Heart left ventricle (tissue), 16 donors: ENCODE measurements at regions of chr14 and their contacts with region 1.

Region 1: DNA sequence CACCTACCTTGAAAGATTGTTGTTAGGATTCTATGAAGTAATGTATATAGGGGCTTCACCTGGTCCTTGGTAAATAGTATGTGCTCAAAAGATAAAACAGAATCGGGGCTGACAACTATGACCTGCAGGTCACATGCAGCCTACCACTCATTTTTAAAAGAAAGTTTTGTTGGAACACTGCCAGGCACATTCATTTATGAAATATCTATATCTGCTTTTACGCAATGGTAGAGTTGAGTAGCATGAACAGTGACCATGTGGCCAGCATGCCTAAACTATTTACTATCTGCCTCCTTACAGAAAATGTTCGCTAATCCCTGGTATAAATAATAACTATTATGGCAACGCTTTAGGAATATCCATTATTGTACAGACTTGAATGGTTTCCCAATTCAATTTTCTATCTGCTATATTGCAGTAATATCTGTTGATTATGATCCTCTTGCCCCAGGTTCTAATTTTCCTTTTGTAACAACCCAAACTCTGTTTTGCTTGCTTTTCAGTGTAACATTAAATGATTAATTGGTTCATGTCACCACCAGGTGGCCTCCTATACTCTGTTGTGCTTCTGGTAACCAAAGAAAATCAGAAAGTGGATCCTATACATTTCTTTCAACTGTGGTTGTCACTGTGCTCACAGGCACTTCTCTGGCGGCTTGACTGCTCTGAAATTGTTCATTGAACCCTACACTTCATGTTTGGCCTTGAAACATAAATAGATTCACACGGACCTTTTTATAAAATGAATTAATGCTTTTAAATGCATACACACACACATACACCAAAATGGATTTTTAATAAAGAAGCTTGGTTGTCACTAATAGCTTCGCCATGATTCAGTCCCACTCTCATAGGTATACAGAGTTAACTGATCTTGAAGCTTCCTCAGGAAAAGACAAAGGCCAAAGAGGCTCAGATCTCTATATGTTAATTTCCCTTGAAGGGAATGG is 227.7 kb upstream of the NPAS3 start:
- DNase-seq: peak in 1 of 5 donors; percentile 17
- ATAC-seq: peak in 1 of 4 donors; percentile 38
- H3K4me3 ChIP-seq: peak overlapping the region in 4 of 12 donors; percentile 7 to 24 (median 18)
- H3K27ac ChIP-seq: peak overlapping the region in 4 of 12 donors; percentile 12 to 79 (median 66)
- H3K4me1 ChIP-seq: peaks cover 5 to 45% (median 34%) of the 10 kb centered on the region in 12 donors
- H3K27me3 ChIP-seq: no peaks in the 10 kb centered on the region
- CTCF ChIP-seq: peak; percentile 31 to 70 (median 55)
- POLR2A ChIP-seq: no peak

Region 2: DNA sequence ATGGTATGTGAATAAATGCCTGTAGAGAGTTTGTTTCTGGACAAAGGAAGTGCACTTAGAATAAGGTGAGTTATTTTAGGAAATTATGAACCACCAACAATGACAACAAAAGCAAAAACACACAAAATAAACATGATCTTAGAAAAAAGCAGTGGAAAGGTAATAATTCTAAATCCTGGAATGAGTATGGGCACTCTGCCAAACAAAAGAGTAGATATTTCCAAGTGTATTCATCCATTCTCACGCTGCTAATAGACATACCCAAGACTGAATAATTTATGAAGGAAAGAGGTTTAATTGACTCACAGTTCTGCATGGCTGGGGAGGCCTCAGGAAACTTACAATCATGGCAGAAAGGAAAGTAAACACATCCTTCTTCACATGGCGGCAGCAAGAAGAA is 41.6 kb before region 1 on chr14:
- intact Hi-C with region 1: no loop called
- DNase-seq: no peak
- ATAC-seq: no peak
- H3K4me3 ChIP-seq: no peak overlapping the region
- H3K27ac ChIP-seq: no peak overlapping the region
- H3K4me1 ChIP-seq: peaks cover 0 to 8% (median 0%) of the 10 kb centered on the region in 12 donors
- H3K27me3 ChIP-seq: no peaks in the 10 kb centered on the region
- CTCF ChIP-seq: no peak
- POLR2A ChIP-seq: no peak

Region 3: DNA sequence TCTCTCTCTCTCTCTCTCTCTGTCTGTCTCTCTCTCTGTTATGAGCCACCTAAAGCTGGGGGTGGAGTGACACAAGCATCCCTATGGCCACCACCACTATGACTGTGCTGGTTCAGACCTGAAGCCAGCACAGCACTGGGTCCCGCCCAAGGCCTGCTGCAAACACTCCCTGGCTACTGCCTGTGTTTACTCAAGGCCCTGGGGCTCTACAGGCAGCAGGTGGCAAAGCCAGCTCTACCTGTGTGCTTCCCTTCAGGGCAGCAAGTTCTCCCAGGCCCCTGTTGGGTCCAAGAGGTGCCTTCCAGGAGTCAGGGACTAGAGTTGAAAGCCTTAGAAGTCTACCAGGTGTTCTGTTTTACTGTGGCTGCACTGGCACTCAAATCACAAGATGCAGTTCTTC is 34.5 kb after region 1 on chr14:
- intact Hi-C with region 1: no loop called
- DNase-seq: no peak
- ATAC-seq: no peak
- H3K4me3 ChIP-seq: no peak overlapping the region
- H3K27ac ChIP-seq: no peak overlapping the region
- H3K4me1 ChIP-seq: peaks cover 0 to 3% (median 0%) of the 10 kb centered on the region in 12 donors
- H3K27me3 ChIP-seq: no peaks in the 10 kb centered on the region
- CTCF ChIP-seq: no peak
- POLR2A ChIP-seq: no peak

Region 4: GRCh38 chr14:32820181-32820580 is 109.2 kb after region 1 on chr14:
- intact Hi-C with region 1: loop called in 6 of 10 experiments (anchors 5 to 10 kb)
- DNase-seq: peak in 3 of 5 donors; percentile 31 to 37 (median 34)
- ATAC-seq: peak; percentile 56 to 73 (median 67)
- H3K4me3 ChIP-seq: no peak overlapping the region
- H3K27ac ChIP-seq: peak overlapping the region; percentile 26 to 96 (median 74)
- H3K4me1 ChIP-seq: peaks cover 0 to 70% (median 9%) of the 10 kb centered on the region in 12 donors
- H3K27me3 ChIP-seq: no peaks in the 10 kb centered on the region
- CTCF ChIP-seq: no peak
- POLR2A ChIP-seq: no peak

Region 5: DNA sequence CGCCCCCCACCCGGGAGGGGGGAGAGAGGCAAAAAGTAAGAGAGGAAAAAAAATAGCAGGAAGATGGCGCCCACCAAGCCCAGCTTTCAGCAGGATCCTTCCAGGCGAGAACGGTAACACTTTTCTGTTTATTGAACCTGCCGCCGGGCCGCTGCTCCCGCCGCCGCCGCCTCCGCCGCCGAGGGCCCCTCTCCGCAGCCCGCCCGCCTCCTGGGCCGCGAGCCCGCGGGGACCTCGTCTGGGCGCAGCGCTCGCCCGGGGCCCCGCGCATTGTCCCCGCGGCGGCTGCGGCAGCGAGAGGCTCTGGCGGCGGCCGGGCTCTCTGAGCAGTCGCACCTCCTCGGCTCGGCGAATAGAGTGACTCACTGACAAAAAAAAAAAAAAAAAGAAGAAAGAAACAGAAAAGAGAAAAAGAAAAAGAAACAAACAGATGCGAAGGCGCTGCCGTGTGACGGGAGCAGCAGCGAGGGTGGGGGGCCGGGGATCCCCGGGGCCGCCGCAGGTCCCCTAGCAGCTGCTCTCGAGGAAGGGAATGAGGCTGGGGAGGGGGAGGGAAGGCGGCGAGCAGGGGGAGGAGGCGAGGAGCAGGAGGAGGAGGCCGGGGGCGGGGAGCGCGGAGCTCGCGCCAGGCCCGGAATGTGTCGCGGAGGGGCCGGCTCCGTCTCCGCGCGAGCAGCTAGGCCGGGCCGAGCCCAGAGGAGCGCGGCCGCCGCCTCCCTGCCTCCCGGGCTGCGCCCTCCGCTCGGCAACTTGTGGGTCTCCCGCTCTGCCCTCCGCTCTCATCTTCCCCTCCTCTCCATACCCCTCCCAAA is 228.5 kb after region 1 on chr14:
- intact Hi-C with region 1: loop called in 1 of 10 experiments (anchors 10 kb)
- DNase-seq: peak; percentile 82 to 87 (median 84)
- ATAC-seq: peak; percentile 73 to 96 (median 92)
- H3K4me3 ChIP-seq: peak overlapping the region; percentile 25 to 69 (median 60)
- H3K27ac ChIP-seq: peak overlapping the region; percentile 55 to 88 (median 74)
- H3K4me1 ChIP-seq: peaks cover 0 to 23% (median 8%) of the 10 kb centered on the region in 12 donors
- H3K27me3 ChIP-seq: peaks cover 8 to 47% (median 30%) of the 10 kb centered on the region in 9 donors
- CTCF ChIP-seq: no peak
- POLR2A ChIP-seq: no peak